OCI-LY7 (cell line): ENCODE measurements at regions of chr1 and their contacts with region 1.

Region 1: GRCh38 chr1:92749024-92749634 is 35.8 kb downstream of the EVI5 start:
- DNase-seq: peak; percentile 81
- H3K4me3 ChIP-seq: no peak overlapping the region
- H3K27ac ChIP-seq: no peak overlapping the region
- H3K4me1 ChIP-seq: no peaks in the 10 kb centered on the region
- CTCF ChIP-seq: peak; percentile 88

Region 2: DNA sequence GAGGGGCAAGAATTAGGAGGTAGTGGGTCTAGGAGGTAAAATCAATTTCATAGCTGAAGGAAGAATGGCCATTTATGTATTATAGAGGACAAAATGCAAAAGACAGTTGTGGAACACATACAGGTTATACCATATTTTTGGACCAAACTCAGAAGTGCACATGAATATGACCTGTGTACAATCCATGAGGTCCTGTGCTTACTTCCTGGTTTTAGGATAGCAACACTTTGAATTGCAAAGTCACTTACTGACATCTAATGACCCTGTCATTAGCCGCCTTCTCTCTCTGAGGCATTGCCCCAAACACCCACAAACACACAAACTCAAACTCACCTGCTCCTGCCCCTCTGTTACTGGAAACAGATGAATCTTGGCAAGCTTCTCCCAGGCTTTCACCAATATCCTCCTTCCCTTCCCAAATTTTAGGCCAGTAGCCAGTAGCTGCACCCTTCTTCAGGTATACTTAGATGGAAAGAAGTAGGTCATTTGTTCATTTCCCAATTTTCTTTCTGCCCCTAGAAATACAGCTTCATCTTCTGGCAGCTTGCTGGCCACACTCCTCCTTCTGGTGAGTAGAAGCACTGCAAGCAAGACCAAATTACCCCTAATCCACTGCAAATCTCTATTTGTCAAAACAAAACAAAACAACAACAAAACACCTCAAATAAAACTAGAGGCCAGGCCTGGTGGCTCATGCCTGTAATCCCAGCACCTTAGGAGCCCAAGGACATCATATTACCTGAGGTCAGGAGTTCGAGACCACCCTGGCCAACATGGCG is 69.0 kb after region 1 on chr1:
- CTCF ChIA-PET with region 1: interaction called, 7 read pairs
- POLR2A ChIA-PET with region 1: interaction called, 6 read pairs
- intact Hi-C with region 1: loop called (anchors 1 kb)
- DNase-seq: peak; percentile 53
- H3K4me3 ChIP-seq: no peak overlapping the region
- H3K27ac ChIP-seq: no peak overlapping the region
- H3K4me1 ChIP-seq: no peaks in the 10 kb centered on the region
- CTCF ChIP-seq: peak; percentile 83

Region 3: GRCh38 chr1:93021539-93022134 is 272.5 kb after region 1 on chr1:
- CTCF ChIA-PET with region 1: no interaction called
- POLR2A ChIA-PET with region 1: no interaction called
- intact Hi-C with region 1: no loop called
- DNase-seq: peak; percentile 87
- H3K4me3 ChIP-seq: peak overlapping the region; percentile 40
- H3K27ac ChIP-seq: peak overlapping the region; percentile 75
- H3K4me1 ChIP-seq: peaks cover 57% of the 10 kb centered on the region
- CTCF ChIP-seq: peak; percentile 100